ENCODE measurements at regions of chr7 and their contacts with region 1.

Region 1: DNA sequence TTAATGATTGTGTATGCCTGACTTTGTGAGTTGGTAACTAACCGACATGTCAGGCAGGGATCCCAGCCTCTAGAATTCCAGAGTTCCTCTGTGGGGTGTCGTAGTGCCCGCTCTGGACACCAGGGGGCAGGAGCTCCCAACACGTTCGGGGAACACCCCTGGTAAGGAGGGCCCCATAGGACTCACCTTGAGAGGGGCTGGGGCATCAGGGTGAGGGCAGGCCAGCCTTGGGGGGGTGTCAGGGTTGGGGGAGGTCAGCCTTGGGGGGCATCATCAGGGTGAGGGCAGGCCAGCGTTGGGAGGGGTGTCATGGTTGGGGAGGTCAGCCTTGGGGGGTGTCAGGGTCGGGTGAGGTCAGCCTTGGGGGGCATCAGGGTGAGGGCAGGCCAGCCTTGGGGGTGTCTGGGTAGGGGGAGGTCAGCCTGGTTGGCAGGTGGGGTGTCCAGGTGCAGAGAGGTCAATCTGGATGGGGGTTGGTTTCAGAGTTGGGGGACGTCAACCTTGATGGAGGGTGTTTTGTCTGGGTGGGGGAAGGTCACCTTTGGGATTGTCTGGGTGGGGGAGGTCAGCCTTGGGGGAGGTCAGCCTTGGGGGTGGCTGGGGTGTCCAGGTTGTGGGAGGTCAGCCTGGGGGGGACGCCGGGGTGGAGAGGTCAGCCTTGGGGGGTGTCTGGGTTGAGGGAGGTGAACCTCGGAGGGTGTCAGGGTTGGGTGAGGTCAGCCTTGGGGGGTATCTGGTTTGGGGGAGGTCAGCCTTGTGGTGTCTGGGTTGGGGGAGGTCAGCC is 45.6 kb upstream of the SUN1 start:
- DNase-seq: peak; percentile 84
- H3K4me3 ChIP-seq: no peak overlapping the region
- H3K27ac ChIP-seq: no peak overlapping the region
- H3K4me1 ChIP-seq: peaks cover 0 to 3% (median 0%) of the 10 kb centered on the region in 4 donors
- H3K27me3 ChIP-seq: no peaks in the 10 kb centered on the region
- CTCF ChIP-seq: peak; percentile 86 to 95 (median 89)
- EP300 ChIP-seq: no peak
- POLR2A ChIP-seq: no peak

Region 2: DNA sequence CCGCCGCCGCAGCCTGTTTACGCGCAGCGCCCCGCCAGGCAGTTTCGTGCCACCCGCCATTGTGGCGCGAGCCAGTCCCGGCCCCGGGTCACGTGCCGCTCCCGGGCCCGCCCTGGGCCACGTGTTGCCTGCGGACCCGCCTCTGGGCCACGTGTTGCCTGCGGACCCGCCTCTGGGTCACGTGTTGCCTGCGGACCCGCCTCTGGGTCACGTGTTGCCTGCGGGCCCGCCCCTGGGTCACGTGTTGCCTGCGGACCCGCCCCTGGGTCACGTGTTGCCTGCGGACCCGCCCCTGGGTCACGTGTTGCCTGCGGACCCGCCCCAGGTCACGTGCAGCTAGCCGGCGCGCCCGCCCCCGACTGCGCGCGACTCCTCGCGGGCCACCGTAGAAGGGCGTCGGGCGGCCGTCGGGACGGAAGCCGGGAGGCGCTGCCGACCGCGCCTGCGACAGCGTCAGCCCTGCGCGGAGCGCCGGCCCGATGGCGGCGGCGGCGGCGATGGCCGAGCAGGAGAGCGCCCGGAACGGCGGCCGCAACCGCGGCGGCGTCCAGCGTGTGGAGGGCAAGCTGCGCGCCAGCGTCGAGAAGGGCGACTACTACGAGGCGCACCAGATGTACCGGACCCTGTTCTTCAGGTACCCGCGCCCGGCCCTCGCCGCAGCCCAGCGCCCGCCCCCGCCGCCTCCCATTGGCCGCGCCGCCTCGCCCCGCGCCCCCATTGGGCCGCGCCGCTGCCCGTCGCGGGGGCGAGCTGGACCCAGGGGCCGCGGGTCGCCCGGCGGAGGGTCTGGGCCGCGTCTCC is 89.7 kb after region 1 on chr7 and contains the start of gene GET4:
- in situ Hi-C with region 1: loop called in 1 of 4 experiments (anchors 10 kb)
- intact Hi-C with region 1: loop called (anchors 5 kb)
- DNase-seq: peak; percentile 97
- H3K4me3 ChIP-seq: peak within 1 kb of the TSS; percentile 62 to 95 (median 88)
- H3K27ac ChIP-seq: peak within 1 kb of the TSS; percentile 91 to 96 (median 94)
- H3K4me1 ChIP-seq: peaks cover 22 to 49% (median 36%) of the 10 kb centered on the region in 4 donors
- H3K27me3 ChIP-seq: no peaks in the 10 kb centered on the region
- CTCF ChIP-seq: peak in 3 of 5 experiments; percentile 30 to 45 (median 31)
- EP300 ChIP-seq: no peak
- POLR2A ChIP-seq: peak; percentile 76
- total RNA-seq, gene GET4: 49.4 to 116 (median 85.2) TPM

Measured in transverse colon (tissue), 4 donors.